Psoas muscle (tissue), 8 donors: ENCODE measurements at regions of chr1 and their contacts with region 1.

Region 1: GRCh38 chr1:168321945-168322344 is 41.3 kb downstream of the TBX19 start:
- DNase-seq: no peak
- ATAC-seq: peak in 2 of 4 donors; percentile 43 to 72
- H3K4me3 ChIP-seq: no peak overlapping the region
- H3K27ac ChIP-seq: no peak overlapping the region
- H3K4me1 ChIP-seq: peaks cover 8% of the 10 kb centered on the region
- H3K27me3 ChIP-seq: no peaks in the 10 kb centered on the region
- CTCF ChIP-seq: peak; percentile 36

Region 2: DNA sequence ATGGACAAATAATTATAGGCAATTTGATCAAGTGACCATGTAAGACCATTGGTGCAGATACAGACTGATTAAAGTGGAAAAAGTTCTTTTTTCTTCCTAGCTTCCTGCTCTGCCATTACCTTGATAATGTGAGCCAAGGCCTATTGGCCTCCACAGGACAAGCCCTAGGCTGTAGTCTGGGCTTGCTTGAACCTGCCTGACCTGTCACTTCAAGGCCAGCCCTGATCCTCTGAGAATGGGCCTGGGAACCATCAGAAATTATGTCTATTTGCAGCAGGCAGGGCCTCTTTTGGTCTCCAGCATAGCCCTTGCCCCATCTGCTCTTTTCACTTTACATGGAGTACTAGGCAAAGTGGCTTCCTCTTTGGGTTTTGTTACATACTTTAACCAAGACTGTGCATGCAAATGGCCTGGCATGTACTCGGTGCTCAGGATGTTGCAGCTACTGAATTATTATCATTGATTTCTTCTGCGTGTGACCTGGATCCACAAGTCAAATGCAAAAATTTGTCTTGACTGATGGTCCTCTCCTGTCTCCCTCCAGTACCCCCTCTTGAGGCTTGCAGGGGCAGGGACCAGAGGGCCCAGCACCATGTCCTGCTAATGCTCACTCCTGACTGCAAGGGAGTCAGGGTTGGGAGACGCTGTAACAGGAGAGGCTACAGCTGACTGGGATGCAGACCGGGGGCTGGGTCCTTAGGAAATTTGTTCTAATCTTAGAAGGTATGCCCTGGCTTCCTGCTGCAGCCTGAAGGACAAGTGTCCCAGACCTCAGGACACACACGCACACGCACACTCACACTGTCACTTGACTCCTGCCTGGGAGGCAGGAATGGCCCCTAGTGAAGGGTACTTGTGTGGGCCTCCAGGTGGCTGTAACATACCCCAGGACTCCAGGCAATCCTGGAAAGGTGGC is 652.5 kb before region 1 on chr1:
- intact Hi-C with region 1: no loop called
- DNase-seq: peak; percentile 46 to 79
- ATAC-seq: peak; percentile 90 to 93 (median 92)
- H3K4me3 ChIP-seq: no peak overlapping the region
- H3K27ac ChIP-seq: peak overlapping the region; percentile 93
- H3K4me1 ChIP-seq: peaks cover 65% of the 10 kb centered on the region
- H3K27me3 ChIP-seq: no peaks in the 10 kb centered on the region
- CTCF ChIP-seq: no peak

Region 3: DNA sequence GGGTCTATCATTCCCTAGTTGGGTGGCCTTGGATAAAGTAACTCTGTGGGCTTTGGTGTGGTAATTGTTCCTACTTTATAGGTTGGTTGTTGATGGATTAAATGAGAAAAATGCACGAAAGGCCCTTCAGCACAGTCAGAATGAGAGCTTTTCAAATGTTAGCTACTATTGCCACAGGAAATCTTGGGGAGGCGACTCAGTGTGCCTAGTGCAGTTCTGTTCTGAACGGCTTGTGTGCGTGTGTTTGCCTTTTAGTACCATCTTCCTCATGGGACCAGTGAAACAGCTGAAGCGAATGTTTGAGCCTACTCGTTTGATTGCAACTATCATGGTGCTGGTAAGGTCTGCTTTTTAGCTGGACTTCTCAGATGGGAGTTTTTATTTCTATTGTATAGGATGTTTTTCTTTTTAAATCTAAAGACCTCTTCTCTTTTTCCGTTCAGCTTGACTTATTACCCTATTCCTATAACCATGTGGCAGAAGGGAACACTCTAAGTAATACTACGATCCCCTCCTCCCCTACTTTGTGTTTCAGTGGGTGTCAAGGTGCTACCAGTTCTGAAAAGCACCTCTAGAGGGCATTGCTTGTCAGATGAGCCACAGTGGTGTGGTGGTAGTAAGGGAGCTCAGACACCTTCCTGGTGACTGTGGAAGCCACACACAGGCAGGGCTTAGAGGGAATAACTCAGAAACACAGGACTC is 86.9 kb before region 1 on chr1:
- intact Hi-C with region 1: loop called in 1 of 2 experiments (anchors 5 kb)
- DNase-seq: no peak
- ATAC-seq: peak; percentile 54 to 81 (median 74)
- H3K4me3 ChIP-seq: no peak overlapping the region
- H3K27ac ChIP-seq: no peak overlapping the region
- H3K4me1 ChIP-seq: no peaks in the 10 kb centered on the region
- H3K27me3 ChIP-seq: no peaks in the 10 kb centered on the region
- CTCF ChIP-seq: peak; percentile 46

Region 4: GRCh38 chr1:168273575-168273974 is 48.4 kb before region 1 on chr1:
- intact Hi-C with region 1: no loop called
- DNase-seq: no peak
- ATAC-seq: no peak
- H3K4me3 ChIP-seq: no peak overlapping the region
- H3K27ac ChIP-seq: no peak overlapping the region
- H3K4me1 ChIP-seq: no peaks in the 10 kb centered on the region
- H3K27me3 ChIP-seq: no peaks in the 10 kb centered on the region
- CTCF ChIP-seq: no peak